GM12878 (cell line): ENCODE measurements at regions of chr12 and their contacts with region 1.

Region 1: DNA sequence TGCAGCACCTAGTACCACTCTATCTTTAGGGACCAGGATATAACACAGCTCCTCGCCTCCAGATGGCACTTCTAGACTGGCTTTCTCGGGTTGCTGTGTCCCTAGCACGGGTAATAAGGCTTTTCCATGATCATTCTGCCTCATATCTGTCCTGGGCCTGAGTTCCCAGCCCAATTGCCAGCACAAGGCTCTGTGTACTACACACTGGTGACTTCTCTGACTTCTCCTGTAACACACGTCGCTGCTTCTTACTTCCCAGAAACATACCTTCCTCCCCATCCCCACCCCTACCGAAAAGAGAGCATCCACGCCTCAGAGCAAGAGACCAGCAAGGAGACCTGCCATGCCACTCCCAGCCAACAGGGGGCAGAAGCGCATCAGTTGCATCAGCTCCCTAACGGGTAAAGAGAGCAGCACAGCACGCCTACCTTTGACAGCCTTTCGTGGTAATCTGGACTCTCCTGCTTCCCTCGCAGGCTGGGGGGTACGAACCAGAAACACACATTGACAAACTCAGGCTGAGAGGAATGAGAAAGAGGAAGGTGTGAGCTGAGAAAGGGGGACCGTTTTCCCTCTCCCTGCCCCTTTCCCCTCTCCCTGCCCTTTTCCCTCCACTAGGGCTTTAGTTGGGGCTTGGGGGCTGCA is 21.2 kb upstream of the ZNF740 start:
- DNase-seq: peak; percentile 72
- ATAC-seq: peak; percentile 99
- H3K4me3 ChIP-seq: no peak overlapping the region
- H3K27ac ChIP-seq: no peak overlapping the region
- H3K4me1 ChIP-seq: no peaks in the 10 kb centered on the region; the same call in 1 of the 2 replicates
- H3K27me3 ChIP-seq: no peaks in the 10 kb centered on the region
- CTCF ChIP-seq: peak; percentile 97 to 100 (median 99)
- EP300 ChIP-seq: no peak
- POLR2A ChIP-seq: no peak
- RAD21 ChIP-seq: peak; percentile 99

Region 2: GRCh38 chr12:52667511-52667910 is 491.8 kb before region 1 on chr12:
- CTCF ChIA-PET with region 1: no interaction called
- POLR2A ChIA-PET with region 1: no interaction called
- RAD21 ChIA-PET with region 1: no interaction called
- SMC1A ChIA-PET with region 1: no interaction called
- in situ Hi-C with region 1: no loop called
- intact Hi-C with region 1: no loop called
- DNase-seq: no peak
- ATAC-seq: no peak
- H3K4me3 ChIP-seq: no peak overlapping the region
- H3K27ac ChIP-seq: no peak overlapping the region
- H3K4me1 ChIP-seq: no peaks in the 10 kb centered on the region
- H3K27me3 ChIP-seq: peaks cover 0 to 2% of the 10 kb centered on the region in 2 experiments; a peak in 1 of 4 replicates
- CTCF ChIP-seq: peak in 2 of 3 experiments; percentile 8 to 14; a peak in 1 of 6 replicates
- EP300 ChIP-seq: no peak
- POLR2A ChIP-seq: no peak
- RAD21 ChIP-seq: no peak

Region 3: DNA sequence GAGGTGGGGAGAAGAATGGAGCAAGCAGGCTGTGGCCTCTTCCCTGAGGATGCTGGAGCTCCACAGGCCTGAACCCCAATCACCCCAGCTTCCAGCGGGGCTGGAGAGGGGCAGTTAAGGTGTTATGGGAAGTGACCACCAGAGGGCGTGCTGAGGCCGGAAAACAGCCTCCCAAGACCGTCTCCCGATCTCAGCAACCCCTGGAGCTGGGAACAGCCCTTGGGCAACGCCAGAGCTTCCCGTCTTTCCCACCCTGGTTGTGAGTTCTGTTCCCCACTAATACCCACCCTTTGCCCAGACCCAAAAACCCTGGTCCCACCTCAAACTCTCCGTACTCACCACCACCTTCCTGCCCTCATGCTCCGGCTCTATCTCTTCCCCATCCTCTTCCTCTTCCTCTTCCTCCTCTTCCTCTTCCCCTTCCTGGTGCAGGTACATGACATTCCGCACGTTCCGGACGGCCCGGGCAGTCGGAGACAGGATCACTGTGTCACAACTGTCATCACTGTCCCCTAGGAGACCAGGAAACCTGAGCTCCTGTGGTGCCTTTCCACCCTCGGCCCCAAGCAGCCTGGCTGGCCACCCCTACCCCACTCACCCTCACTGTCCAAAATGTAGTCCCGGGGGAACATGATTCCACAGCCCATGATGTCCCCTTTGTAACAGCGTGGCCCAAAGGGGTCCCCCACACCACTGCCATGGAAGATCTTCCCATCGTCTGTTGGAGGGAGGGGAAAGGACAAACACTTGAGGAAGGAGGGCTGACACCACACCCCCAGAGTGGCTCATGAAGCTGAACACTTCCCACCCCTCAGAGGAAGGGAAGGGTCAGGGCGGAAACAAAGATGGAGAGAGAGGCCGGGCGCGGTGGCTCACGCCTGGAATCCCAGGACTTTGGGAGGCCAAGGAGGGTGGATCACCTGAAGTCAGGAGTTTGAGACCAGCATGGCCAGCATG is 93.1 kb before region 1 on chr12:
- CTCF ChIA-PET with region 1: interaction called, 35 read pairs
- POLR2A ChIA-PET with region 1: no interaction called
- RAD21 ChIA-PET with region 1: interaction called, 25 read pairs
- SMC1A ChIA-PET with region 1: interaction called, 6 read pairs
- in situ Hi-C with region 1: no loop called
- intact Hi-C with region 1: loop called (anchors 5 kb)
- DNase-seq: no peak
- ATAC-seq: peak; percentile 90
- H3K4me3 ChIP-seq: no peak overlapping the region
- H3K27ac ChIP-seq: no peak overlapping the region
- H3K4me1 ChIP-seq: no peaks in the 10 kb centered on the region
- H3K27me3 ChIP-seq: no peaks in the 10 kb centered on the region
- CTCF ChIP-seq: peak; percentile 72 to 85 (median 85)
- EP300 ChIP-seq: no peak
- POLR2A ChIP-seq: no peak
- RAD21 ChIP-seq: peak; percentile 75

Region 4: DNA sequence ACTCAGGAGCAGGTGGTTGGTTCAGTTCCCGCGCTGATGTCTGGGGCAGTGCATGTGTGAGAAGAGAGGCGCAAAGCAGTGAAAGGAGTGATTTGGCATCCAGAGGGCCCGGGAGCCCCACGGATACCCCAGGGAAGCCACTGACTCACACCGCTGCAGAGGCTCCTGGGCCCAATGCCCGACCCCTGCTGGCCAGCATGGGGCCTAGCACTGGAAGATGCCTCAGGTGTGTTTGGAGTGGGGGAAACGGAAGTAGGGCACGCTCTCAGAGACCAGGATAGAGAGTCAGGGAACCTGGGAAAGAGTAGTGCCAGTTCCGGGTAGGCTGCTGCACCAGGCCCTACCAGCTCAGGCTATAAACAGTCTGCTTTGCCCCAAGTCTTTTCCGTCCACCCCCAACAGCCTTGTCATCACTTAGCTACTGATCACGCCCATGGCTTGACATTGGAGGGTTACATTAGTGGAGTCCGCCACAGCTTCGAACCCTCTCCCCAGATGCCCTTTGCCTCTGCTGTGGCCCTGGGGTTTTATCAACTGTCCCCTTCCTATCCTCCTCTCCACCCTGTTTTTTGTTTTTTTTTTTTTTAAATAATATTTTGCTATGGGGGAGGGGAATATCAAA is 30.9 kb after region 1 on chr12:
- CTCF ChIA-PET with region 1: interaction called, 89 read pairs
- POLR2A ChIA-PET with region 1: interaction called, 4 read pairs
- RAD21 ChIA-PET with region 1: interaction called, 16 read pairs
- SMC1A ChIA-PET with region 1: interaction called, 19 read pairs
- in situ Hi-C with region 1: no loop called
- intact Hi-C with region 1: loop called (anchors 1 kb)
- DNase-seq: no peak
- ATAC-seq: peak; percentile 90
- H3K4me3 ChIP-seq: no peak overlapping the region
- H3K27ac ChIP-seq: no peak overlapping the region
- H3K4me1 ChIP-seq: no peaks in the 10 kb centered on the region
- H3K27me3 ChIP-seq: no peaks in the 10 kb centered on the region
- CTCF ChIP-seq: peak; percentile 52 to 87 (median 74)
- EP300 ChIP-seq: no peak
- POLR2A ChIP-seq: peak; percentile 66
- RAD21 ChIP-seq: peak; percentile 59

Region 5: GRCh38 chr12:53213348-53213747 is 54.0 kb after region 1 on chr12:
- CTCF ChIA-PET with region 1: interaction called, 188 read pairs
- POLR2A ChIA-PET with region 1: interaction called, 7 read pairs
- RAD21 ChIA-PET with region 1: interaction called, 58 read pairs
- SMC1A ChIA-PET with region 1: interaction called, 62 read pairs
- in situ Hi-C with region 1: no loop called
- intact Hi-C with region 1: no loop called
- DNase-seq: no peak
- ATAC-seq: peak; percentile 83
- H3K4me3 ChIP-seq: no peak overlapping the region
- H3K27ac ChIP-seq: no peak overlapping the region
- H3K4me1 ChIP-seq: peaks cover 27% of the 10 kb centered on the region
- H3K27me3 ChIP-seq: no peaks in the 10 kb centered on the region
- CTCF ChIP-seq: peak; percentile 89 to 96 (median 94)
- EP300 ChIP-seq: no peak
- POLR2A ChIP-seq: no peak
- RAD21 ChIP-seq: peak; percentile 96

Region 6: GRCh38 chr12:53259891-53260290 is 100.6 kb after region 1 on chr12:
- CTCF ChIA-PET with region 1: interaction called, 10 read pairs
- POLR2A ChIA-PET with region 1: no interaction called
- RAD21 ChIA-PET with region 1: no interaction called
- SMC1A ChIA-PET with region 1: interaction called, 5 read pairs
- in situ Hi-C with region 1: no loop called
- intact Hi-C with region 1: no loop called
- DNase-seq: no peak
- ATAC-seq: no peak
- H3K4me3 ChIP-seq: no peak overlapping the region
- H3K27ac ChIP-seq: no peak overlapping the region
- H3K4me1 ChIP-seq: peaks cover 16% of the 10 kb centered on the region
- H3K27me3 ChIP-seq: no peaks in the 10 kb centered on the region
- CTCF ChIP-seq: no peak
- EP300 ChIP-seq: no peak
- POLR2A ChIP-seq: no peak
- RAD21 ChIP-seq: no peak

Region 7: DNA sequence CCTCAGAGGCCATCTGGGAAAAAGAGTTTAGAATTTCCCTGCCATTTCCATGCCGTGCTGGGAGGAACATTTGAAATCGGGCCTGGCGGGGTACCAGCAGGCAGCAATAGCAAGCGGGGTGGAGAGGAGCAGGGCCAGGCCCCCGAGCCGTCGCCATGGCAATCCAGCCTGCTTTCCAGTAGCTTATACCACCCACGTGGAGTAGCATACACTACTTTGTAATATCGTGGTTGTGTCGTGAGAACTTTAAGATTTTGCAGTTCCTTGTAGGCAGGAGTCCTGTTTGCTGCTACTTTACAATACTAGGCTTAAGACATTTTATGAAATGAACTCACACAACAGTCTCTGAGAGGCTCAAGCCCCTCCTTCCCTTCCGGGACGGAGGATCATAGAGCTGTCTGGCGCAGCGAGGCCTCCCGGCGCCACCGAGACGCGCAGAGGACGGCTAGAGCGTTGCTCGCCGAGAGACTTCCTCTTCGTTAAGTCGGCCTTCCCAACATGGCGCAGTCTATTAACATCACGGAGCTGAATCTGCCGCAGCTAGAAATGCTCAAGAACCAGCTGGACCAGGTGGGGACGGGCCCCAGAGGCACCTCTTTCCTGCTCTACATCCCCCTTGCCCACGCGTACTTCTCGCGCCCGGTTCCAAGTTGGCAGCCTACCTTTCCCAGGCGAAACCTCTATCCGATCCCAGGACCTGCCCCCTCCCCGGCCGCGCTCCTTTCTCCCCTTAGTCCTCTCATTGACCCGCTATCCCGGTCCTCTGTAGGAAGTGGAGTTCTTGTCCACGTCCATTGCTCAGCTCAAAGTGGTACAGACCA is 136.0 kb after region 1 on chr12 and contains the start of gene PFDN5:
- CTCF ChIA-PET with region 1: interaction called, 144 read pairs
- POLR2A ChIA-PET with region 1: interaction called, 3 read pairs
- RAD21 ChIA-PET with region 1: interaction called, 16 read pairs
- SMC1A ChIA-PET with region 1: interaction called, 35 read pairs
- in situ Hi-C with region 1: no loop called
- intact Hi-C with region 1: no loop called
- DNase-seq: peak; percentile 73
- ATAC-seq: peak; percentile 95
- H3K4me3 ChIP-seq: peak within 1 kb of the TSS; percentile 82
- H3K27ac ChIP-seq: peak within 1 kb of the TSS; percentile 75
- H3K4me1 ChIP-seq: peaks cover 21% of the 10 kb centered on the region
- H3K27me3 ChIP-seq: no peaks in the 10 kb centered on the region
- CTCF ChIP-seq: peak in 1 of 3 experiments; percentile 8; a peak in 1 of 6 replicates
- EP300 ChIP-seq: 0 out of 4 replicates have a peak, but pooled peaks of 1 of the 2 experiments have one; percentile 27
- POLR2A ChIP-seq: peak; percentile 90
- RAD21 ChIP-seq: no peak
- polyA plus RNA-seq, gene PFDN5: 1,522 to 1,596 TPM

Region 8: DNA sequence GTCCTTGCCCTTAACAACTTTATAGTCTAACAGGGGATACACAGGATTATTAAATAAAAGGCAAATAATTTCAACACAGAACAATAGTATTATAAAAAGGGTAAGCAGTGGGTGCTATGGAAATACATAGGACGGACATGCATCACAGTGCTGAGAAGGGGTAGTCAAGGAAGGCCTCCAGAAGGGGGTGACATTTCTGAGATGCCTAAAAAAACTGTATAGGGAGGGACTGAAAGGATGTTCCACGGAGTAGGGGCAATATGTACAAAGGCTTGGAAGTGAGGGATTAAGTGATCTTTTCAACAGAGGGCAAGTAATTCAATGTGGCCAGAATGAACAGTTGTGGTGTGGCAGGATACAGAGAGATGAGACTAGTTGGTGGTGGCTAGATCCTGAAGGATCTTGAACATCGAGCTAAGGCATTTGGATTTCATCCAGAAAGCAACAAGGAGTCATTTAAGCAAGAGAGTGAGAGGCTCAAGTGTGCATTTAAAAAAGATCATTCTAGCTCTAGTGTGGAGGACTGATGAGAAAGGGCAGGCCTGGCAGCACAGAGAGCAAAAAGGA is 525.4 kb after region 1 on chr12:
- CTCF ChIA-PET with region 1: no interaction called
- POLR2A ChIA-PET with region 1: no interaction called
- RAD21 ChIA-PET with region 1: no interaction called
- SMC1A ChIA-PET with region 1: no interaction called
- in situ Hi-C with region 1: no loop called
- intact Hi-C with region 1: no loop called
- DNase-seq: no peak
- ATAC-seq: no peak
- H3K4me3 ChIP-seq: no peak overlapping the region
- H3K27ac ChIP-seq: no peak overlapping the region
- H3K4me1 ChIP-seq: no peaks in the 10 kb centered on the region
- H3K27me3 ChIP-seq: no peaks in the 10 kb centered on the region
- CTCF ChIP-seq: no peak
- EP300 ChIP-seq: no peak
- POLR2A ChIP-seq: no peak
- RAD21 ChIP-seq: no peak